Caco-2 (cell line): ENCODE measurements at regions of chr10 and their contacts with region 1.

Region 1: DNA sequence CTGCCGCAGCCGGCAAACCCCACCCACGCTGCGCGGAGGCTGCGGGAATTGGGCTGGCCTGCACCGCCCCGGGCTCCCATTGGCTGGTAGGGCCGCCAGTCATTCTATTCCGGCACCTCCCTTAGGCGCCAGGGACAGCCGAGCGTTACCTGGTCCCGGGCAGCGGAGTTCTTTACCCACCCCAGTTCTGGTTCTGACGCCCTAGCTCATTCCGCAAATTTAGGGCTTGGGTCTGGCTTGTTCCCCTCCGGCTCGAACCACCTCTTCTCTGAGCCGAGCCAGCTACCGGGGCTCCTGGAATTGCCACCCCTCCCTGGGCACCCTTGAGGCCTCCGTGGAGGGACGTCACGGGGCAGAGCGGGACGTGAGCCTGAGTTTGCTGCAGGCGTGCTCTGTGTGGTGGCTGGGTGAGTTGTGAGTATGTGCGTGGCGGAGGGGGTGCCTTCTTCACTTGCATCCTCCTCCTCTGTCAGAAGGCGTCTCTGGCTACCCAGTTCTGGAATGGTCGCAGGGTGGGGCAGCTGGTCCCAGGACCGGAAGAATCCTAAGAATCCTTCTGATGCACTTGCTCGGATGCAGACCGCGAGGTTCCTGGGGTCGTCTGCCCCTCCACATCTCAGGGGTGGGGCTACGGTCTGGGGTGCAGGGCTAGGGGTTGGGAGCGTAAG is at the starts of genes PDZD7 and SFXN3:
- DNase-seq: peak; percentile 97 to 99
- H3K4me3 ChIP-seq: peak within 1 kb of the TSS; percentile 76
- H3K4me3 Mint-ChIP-seq: peak within 1 kb of the TSS; percentile 80
- H3K27ac Mint-ChIP-seq: peak within 1 kb of the TSS; percentile 93
- H3K4me1 ChIP-seq: peaks cover 33% of the 10 kb centered on the region
- H3K4me1 Mint-ChIP-seq: peaks cover 17% of the 10 kb centered on the region
- H3K27me3 ChIP-seq: no peaks in the 10 kb centered on the region
- H3K27me3 Mint-ChIP-seq: no peaks in the 10 kb centered on the region
- CTCF ChIP-seq: no peak
- total RNA-seq, gene PDZD7: 1.4 and 1.5 TPM in 2 replicates
- total RNA-seq, gene SFXN3: 23.4 and 30.3 TPM in 2 replicates

Region 2: GRCh38 chr10:101012525-101013364 is 18.5 kb before region 1 on chr10:
- CTCF ChIA-PET with region 1: interaction called, 23 read pairs
- POLR2A ChIA-PET with region 1: interaction called, 5 read pairs
- intact Hi-C with region 1: no loop called
- DNase-seq: peak; percentile 84 to 85
- H3K4me3 ChIP-seq: no peak overlapping the region
- H3K4me3 Mint-ChIP-seq: no peak overlapping the region
- H3K27ac Mint-ChIP-seq: peak overlapping the region; percentile 2
- H3K4me1 ChIP-seq: no peaks in the 10 kb centered on the region
- H3K4me1 Mint-ChIP-seq: peaks cover 15% of the 10 kb centered on the region
- H3K27me3 ChIP-seq: no peaks in the 10 kb centered on the region
- H3K27me3 Mint-ChIP-seq: no peaks in the 10 kb centered on the region
- CTCF ChIP-seq: peak; percentile 72 to 84

Region 3: GRCh38 chr10:101060036-101060950 is 29.0 kb after region 1 on chr10:
- CTCF ChIA-PET with region 1: interaction called, 16 read pairs
- POLR2A ChIA-PET with region 1: interaction called, 7 read pairs
- intact Hi-C with region 1: loop called (anchors 5 kb)
- DNase-seq: peak; percentile 91 to 94
- H3K4me3 ChIP-seq: peak overlapping the region; percentile 76
- H3K4me3 Mint-ChIP-seq: peak overlapping the region; percentile 98
- H3K27ac Mint-ChIP-seq: peak overlapping the region; percentile 99
- H3K4me1 ChIP-seq: peaks cover 32% of the 10 kb centered on the region
- H3K4me1 Mint-ChIP-seq: peaks cover 22% of the 10 kb centered on the region
- H3K27me3 ChIP-seq: no peaks in the 10 kb centered on the region
- H3K27me3 Mint-ChIP-seq: no peaks in the 10 kb centered on the region
- CTCF ChIP-seq: peak; percentile 89 to 90

Region 4: GRCh38 chr10:101095542-101096213 is 64.4 kb after region 1 on chr10:
- CTCF ChIA-PET with region 1: interaction called, 10 read pairs
- POLR2A ChIA-PET with region 1: no interaction called
- intact Hi-C with region 1: no loop called
- DNase-seq: peak; percentile 95 to 97
- H3K4me3 ChIP-seq: no peak overlapping the region
- H3K4me3 Mint-ChIP-seq: no peak overlapping the region
- H3K27ac Mint-ChIP-seq: no peak overlapping the region
- H3K4me1 ChIP-seq: peaks cover 35% of the 10 kb centered on the region
- H3K4me1 Mint-ChIP-seq: peaks cover 32% of the 10 kb centered on the region
- H3K27me3 ChIP-seq: no peaks in the 10 kb centered on the region
- H3K27me3 Mint-ChIP-seq: no peaks in the 10 kb centered on the region
- CTCF ChIP-seq: peak; percentile 88 to 90